A673 (cell line): ENCODE measurements at regions of chr1 and their contacts with region 1.

Region 1: GRCh38 chr1:54273092-54273794 is 73.3 kb downstream of the MRPL37 start:
- DNase-seq: peak; percentile 86
- H3K4me3 ChIP-seq: no peak overlapping the region
- H3K27ac ChIP-seq: peak overlapping the region; percentile 67
- H3K4me1 ChIP-seq: peaks cover 22% of the 10 kb centered on the region
- H3K27me3 ChIP-seq: no peaks in the 10 kb centered on the region
- CTCF ChIP-seq: peak; percentile 64

Region 2: GRCh38 chr1:53473463-53473862 is 799.8 kb before region 1 on chr1:
- CTCF ChIA-PET with region 1: no interaction called
- POLR2A ChIA-PET with region 1: no interaction called
- intact Hi-C with region 1: no loop called
- DNase-seq: no peak
- H3K4me3 ChIP-seq: no peak overlapping the region
- H3K27ac ChIP-seq: no peak overlapping the region
- H3K4me1 ChIP-seq: no peaks in the 10 kb centered on the region
- H3K27me3 ChIP-seq: no peaks in the 10 kb centered on the region
- CTCF ChIP-seq: peak; percentile 34; the same call in 1 of the 2 replicates

Region 3: GRCh38 chr1:54121482-54122134 is 151.6 kb before region 1 on chr1:
- CTCF ChIA-PET with region 1: interaction called, 10 read pairs
- POLR2A ChIA-PET with region 1: no interaction called
- intact Hi-C with region 1: no loop called
- DNase-seq: peak; percentile 74
- H3K4me3 ChIP-seq: no peak overlapping the region
- H3K27ac ChIP-seq: no peak overlapping the region
- H3K4me1 ChIP-seq: no peaks in the 10 kb centered on the region
- H3K27me3 ChIP-seq: no peaks in the 10 kb centered on the region
- CTCF ChIP-seq: peak; percentile 71

Region 4: DNA sequence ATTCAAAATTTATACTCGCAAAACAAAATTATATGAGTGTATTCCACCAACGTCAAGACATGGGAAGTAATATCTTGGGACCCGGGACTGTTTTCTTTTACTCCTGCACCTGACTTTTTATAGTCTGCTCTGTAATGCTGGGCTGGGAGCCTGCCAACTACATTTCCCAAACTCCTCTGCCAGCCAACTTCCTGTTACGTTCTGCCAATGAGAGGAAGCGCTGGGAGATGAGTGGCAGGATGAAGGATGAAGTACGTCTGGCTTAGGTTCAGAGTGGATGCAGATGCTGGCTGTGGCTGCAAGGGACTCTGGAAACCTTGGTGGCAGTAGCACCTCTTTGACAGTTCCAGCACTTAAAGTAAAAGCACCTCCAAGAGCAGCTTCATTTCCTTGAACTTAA is 882.3 kb after region 1 on chr1:
- CTCF ChIA-PET with region 1: no interaction called
- POLR2A ChIA-PET with region 1: no interaction called
- intact Hi-C with region 1: no loop called
- DNase-seq: peak; percentile 41
- H3K4me3 ChIP-seq: no peak overlapping the region
- H3K27ac ChIP-seq: no peak overlapping the region
- H3K4me1 ChIP-seq: no peaks in the 10 kb centered on the region
- H3K27me3 ChIP-seq: no peaks in the 10 kb centered on the region
- CTCF ChIP-seq: no peak